ENCODE measurements at regions of chr1 and their contacts with region 1.

Region 1: DNA sequence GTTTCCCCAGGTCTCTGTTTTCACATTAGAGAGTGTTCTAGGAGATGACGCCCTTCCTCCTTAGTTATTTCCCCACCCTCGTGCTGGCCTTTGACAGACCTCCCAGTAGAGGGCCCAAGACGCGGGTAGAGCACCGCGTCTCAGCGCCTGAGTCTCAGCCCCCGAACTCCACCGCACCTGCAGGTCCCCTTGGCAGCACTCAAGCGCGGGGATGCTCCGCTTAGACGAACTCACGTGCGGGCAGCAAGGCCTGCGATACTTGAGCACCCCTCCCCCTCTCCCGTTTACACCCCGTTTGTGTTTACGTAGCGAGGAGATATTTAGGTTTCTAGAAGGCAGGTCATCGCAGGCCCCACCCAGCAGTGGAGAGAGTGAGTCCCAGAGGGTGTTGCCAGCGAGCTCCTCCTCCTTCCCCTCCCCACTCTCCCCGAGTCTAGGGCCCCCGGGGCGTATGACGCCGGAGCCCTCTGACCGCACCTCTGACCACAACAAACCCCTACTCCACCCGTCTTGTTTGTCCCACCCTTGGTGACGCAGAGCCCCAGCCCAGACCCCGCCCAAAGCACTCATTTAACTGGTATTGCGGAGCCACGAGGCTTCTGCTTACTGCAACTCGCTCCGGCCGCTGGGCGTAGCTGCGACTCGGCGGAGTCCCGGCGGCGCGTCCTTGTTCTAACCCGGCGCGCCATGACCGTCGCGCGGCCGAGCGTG is at the start of gene CD55:
- DNase-seq: peak; percentile 98 to 100 (median 100)
- H3K4me3 ChIP-seq: peak within 1 kb of the TSS; percentile 100
- H3K4me3 Mint-ChIP-seq: peak within 1 kb of the TSS; percentile 85 to 98 (median 93)
- H3K27ac ChIP-seq: peak within 1 kb of the TSS; percentile 97
- H3K27ac Mint-ChIP-seq: peak within 1 kb of the TSS; percentile 91 to 100 (median 99)
- H3K4me1 ChIP-seq: peaks cover 40% of the 10 kb centered on the region
- H3K4me1 Mint-ChIP-seq: peaks cover 31 to 52% (median 47%) of the 10 kb centered on the region in 3 donors
- H3K27me3 ChIP-seq: no peaks in the 10 kb centered on the region
- H3K27me3 Mint-ChIP-seq: peaks cover 0 to 5% of the 10 kb centered on the region in 2 donors
- total RNA-seq, gene CD55: 85.2 to 94.6 TPM

Region 2: DNA sequence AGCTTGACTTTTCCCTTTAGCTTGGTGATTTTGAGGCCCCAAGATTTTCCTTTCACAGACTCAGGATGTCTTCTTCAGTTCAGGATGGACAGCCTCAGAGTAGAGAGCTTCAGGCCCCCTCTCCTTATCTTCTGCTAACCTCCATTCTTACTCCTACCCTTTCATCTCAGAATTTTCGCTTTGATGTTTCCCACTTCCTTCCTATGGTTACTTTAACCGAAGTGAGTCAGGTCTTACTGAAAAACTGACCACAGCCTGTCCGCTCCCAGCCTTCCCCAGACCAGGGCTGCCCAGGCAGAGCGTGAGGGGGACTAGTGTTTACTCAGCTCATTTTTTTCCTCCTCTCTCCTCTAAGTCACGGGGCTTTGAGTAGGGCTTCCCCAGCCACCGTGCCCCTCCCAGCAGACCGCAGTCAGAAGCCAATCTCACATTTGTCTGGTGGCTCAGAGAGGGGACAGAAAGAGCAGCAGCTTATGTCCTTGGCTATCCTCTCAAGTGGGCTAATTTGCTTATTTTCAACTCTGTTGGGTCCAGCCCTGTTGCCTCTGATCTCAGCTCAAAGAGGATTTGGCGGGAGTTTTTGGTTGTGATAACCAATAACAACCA is 554.9 kb before region 1 on chr1:
- CTCF ChIA-PET with region 1: no interaction called
- POLR2A ChIA-PET with region 1: no interaction called
- DNase-seq: peak; percentile 57 to 84 (median 73)
- H3K4me3 ChIP-seq: peak overlapping the region; percentile 7
- H3K4me3 Mint-ChIP-seq: peak overlapping the region; percentile 25 to 82 (median 63)
- H3K27ac ChIP-seq: no peak overlapping the region
- H3K27ac Mint-ChIP-seq: peak overlapping the region; percentile 21 to 98 (median 85)
- H3K4me1 ChIP-seq: peaks cover 61% of the 10 kb centered on the region
- H3K4me1 Mint-ChIP-seq: peaks cover 55 to 78% (median 75%) of the 10 kb centered on the region in 3 donors
- H3K27me3 ChIP-seq: no peaks in the 10 kb centered on the region
- H3K27me3 Mint-ChIP-seq: no peaks in the 10 kb centered on the region

Region 3: GRCh38 chr1:207217778-207218511 is 103.3 kb before region 1 on chr1:
- CTCF ChIA-PET with region 1: no interaction called
- POLR2A ChIA-PET with region 1: interaction called, 10 read pairs
- DNase-seq: no peak
- H3K4me3 ChIP-seq: no peak overlapping the region
- H3K4me3 Mint-ChIP-seq: no peak overlapping the region
- H3K27ac ChIP-seq: no peak overlapping the region
- H3K27ac Mint-ChIP-seq: no peak overlapping the region
- H3K4me1 ChIP-seq: no peaks in the 10 kb centered on the region
- H3K4me1 Mint-ChIP-seq: peaks cover 0 to 7% (median 4%) of the 10 kb centered on the region in 3 donors
- H3K27me3 ChIP-seq: no peaks in the 10 kb centered on the region
- H3K27me3 Mint-ChIP-seq: peaks cover 0 to 8% of the 10 kb centered on the region in 2 donors

Region 4: GRCh38 chr1:207336559-207337467 is 15.6 kb after region 1 on chr1:
- CTCF ChIA-PET with region 1: interaction called, 13 read pairs
- POLR2A ChIA-PET with region 1: interaction called, 30 read pairs
- DNase-seq: peak in 2 of 5 donors; percentile 75 to 87
- H3K4me3 ChIP-seq: peak overlapping the region; percentile 33
- H3K4me3 Mint-ChIP-seq: peak overlapping the region; percentile 7 to 67 (median 49)
- H3K27ac ChIP-seq: peak overlapping the region; percentile 35
- H3K27ac Mint-ChIP-seq: peak overlapping the region; percentile 73 to 93 (median 88)
- H3K4me1 ChIP-seq: peaks cover 47% of the 10 kb centered on the region
- H3K4me1 Mint-ChIP-seq: peaks cover 60 to 75% (median 72%) of the 10 kb centered on the region in 3 donors
- H3K27me3 ChIP-seq: no peaks in the 10 kb centered on the region
- H3K27me3 Mint-ChIP-seq: peaks cover 0 to 1% of the 10 kb centered on the region in 2 donors

Region 5: DNA sequence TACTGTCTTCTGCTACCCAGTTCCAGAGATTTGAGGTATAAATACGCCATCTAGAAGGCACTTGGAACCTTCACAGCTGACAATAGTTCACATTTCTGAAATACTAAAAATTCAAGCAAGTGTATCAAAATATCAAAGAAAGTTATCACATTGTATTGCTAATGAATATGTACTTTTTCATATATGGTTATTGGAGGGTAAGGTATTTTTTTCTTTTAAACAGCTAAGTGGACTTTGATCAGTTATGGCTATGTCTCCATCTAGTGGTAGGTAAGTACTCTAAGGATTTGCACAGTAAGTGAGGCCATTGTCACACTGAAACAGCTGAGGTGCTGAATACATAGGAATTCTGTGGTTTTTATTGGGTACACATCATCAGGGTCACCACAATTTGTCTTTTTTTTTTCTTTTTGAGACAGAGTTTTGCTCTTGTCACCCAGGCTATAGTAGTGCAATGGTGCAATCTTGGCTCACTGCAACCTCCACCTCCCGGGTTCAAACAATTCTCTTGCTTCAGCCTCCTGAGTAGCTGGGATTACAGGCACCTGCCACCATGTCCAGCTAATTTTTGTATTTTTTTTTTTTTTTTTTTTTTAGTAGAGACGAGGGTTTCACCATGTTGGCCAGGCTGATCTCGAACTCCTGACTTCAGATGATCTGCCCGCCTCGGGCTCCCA is 83.8 kb after region 1 on chr1:
- CTCF ChIA-PET with region 1: interaction called, 17 read pairs
- POLR2A ChIA-PET with region 1: no interaction called
- DNase-seq: peak in 2 of 5 donors; percentile 47 to 54
- H3K4me3 ChIP-seq: no peak overlapping the region
- H3K4me3 Mint-ChIP-seq: no peak overlapping the region
- H3K27ac ChIP-seq: no peak overlapping the region
- H3K27ac Mint-ChIP-seq: no peak overlapping the region
- H3K4me1 ChIP-seq: no peaks in the 10 kb centered on the region
- H3K4me1 Mint-ChIP-seq: no peaks in the 10 kb centered on the region
- H3K27me3 ChIP-seq: no peaks in the 10 kb centered on the region
- H3K27me3 Mint-ChIP-seq: peaks cover 4 to 12% of the 10 kb centered on the region in 2 donors

Measured in CD8-positive, alpha-beta memory T cell (primary cell).